ENCODE measurements at regions of chr22 and their contacts with region 1.

Region 1: GRCh38 chr22:38461414-38462081 is 6.3 kb upstream of the KDELR3 start:
- DNase-seq: peak; percentile 65
- H3K4me3 ChIP-seq: no peak overlapping the region
- H3K27ac ChIP-seq: no peak overlapping the region
- H3K4me1 ChIP-seq: no peaks in the 10 kb centered on the region
- H3K27me3 ChIP-seq: peaks cover 28 to 31% of the 10 kb centered on the region in 2 experiments
- CTCF ChIP-seq: no peak
- POLR2A ChIP-seq: no peak

Region 2: DNA sequence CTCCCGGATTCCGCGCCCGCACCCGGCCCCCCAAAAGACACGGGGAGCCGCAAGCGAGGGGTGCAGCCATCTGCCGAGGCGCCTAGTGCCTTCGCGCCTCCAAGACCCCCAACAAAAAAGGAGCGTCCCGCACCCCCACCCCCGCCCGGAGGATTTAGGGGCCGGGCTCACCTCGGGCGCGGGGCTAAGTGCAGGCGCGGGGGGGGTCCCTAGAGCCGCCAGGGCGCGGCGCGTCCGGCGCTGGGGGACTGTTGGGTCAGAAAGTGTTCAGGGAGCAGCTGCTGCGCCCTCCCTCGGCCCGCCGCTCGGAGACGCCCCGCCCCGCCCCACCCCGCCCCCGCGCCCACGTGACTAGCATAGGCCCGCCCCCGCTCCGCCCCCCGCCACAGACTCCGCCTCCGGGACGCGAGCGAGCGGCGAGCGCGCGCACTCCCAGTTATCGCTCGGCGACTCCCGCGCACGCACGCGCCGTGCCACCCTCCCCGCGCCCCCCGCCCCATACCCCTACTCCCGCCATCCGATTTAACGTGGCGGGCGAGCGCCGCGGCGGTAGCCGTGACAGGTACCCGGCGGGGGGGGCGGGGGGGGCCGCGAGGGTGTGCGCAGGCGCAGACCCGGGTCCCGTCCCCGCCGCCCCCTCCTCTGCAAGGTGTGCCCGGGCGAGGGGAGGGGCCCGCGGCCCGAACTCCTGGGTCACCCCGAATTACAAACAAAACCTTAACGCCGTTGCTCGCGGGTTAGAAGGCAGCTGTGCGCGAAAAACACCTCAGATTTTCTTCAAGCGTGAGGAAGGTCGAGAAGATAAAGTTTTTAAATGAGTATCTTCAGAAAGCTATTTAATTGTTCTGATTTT is 62.7 kb before region 1 on chr22:
- CTCF ChIA-PET with region 1: no interaction called
- POLR2A ChIA-PET with region 1: no interaction called
- dilution Hi-C with region 1: no loop called
- intact Hi-C with region 1: loop called (anchors 5 kb)
- DNase-seq: peak; percentile 42
- H3K4me3 ChIP-seq: peak overlapping the region; percentile 82 to 94 (median 86)
- H3K27ac ChIP-seq: peak overlapping the region; percentile 37
- H3K4me1 ChIP-seq: peaks cover 2% of the 10 kb centered on the region
- H3K27me3 ChIP-seq: peaks cover 7 to 10% of the 10 kb centered on the region in 2 experiments
- CTCF ChIP-seq: no peak
- POLR2A ChIP-seq: no peak

Region 3: DNA sequence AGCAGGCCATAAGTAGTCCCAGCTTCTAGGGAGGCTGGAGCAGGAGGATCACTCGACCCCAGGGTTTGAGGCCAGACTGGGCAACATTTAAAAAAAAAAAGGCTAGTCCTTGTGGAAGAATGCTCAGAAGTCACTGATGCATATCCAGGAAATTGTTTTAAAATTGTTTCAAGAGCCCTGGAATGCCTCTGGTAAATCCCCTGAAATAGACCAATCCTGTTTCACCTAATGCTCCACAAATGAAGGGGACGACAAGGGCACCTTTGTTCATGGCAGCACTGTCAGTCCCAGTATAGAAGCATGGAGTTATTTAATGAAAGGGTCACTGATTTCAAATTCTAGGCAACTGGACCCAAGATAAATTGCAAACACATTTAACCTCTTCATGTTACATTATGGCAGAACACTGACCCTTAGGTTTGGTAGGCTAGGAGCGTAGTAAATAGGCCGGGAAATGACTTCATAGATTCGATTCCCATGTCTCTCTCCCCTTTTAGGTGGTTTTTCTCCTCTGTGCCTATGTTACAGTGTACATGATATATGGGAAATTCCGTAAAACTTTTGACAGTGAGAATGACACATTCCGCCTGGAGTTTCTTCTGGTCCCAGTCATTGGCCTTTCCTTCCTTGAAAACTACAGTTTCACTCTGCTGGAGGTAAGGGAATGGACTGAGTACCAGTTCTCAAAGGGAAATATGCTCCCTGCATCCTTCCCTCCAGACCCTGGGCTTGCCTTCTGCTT is 17.7 kb after region 1 on chr22:
- CTCF ChIA-PET with region 1: no interaction called
- POLR2A ChIA-PET with region 1: no interaction called
- dilution Hi-C with region 1: no loop called
- intact Hi-C with region 1: no loop called
- DNase-seq: no peak
- H3K4me3 ChIP-seq: no peak overlapping the region
- H3K27ac ChIP-seq: no peak overlapping the region
- H3K4me1 ChIP-seq: no peaks in the 10 kb centered on the region
- H3K27me3 ChIP-seq: no peaks in the 10 kb centered on the region
- CTCF ChIP-seq: no peak
- POLR2A ChIP-seq: no peak